PC-9 (cell line): ENCODE measurements at regions of chr2 and their contacts with region 1.

Region 1: DNA sequence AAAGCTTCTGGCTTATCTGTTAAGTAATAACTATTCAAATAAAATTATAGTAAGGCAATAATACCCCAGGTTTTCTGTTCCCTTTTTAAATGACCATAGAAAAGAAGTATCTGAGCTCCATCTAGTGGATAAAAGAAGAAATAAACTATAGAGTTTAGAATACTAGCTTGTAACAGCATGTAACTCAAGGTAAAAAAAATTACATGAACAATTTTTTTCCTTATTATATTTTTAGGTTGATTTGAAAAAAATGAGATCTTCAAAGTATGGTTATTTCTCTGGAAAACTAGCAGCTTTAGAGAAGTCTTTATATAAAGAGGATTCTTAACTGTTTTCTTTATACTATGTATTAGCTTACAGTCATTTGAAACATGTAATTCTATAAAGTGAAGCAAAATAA is 58.1 kb downstream of the NCKAP1 start:
- DNase-seq: peak in 1 of 2 experiments; percentile 78
- H3K4me3 ChIP-seq: no peak overlapping the region
- H3K27ac ChIP-seq: no peak overlapping the region
- H3K4me1 ChIP-seq: no peaks in the 10 kb centered on the region
- H3K27me3 ChIP-seq: no peaks in the 10 kb centered on the region
- CTCF ChIP-seq: peak; percentile 91

Region 2: DNA sequence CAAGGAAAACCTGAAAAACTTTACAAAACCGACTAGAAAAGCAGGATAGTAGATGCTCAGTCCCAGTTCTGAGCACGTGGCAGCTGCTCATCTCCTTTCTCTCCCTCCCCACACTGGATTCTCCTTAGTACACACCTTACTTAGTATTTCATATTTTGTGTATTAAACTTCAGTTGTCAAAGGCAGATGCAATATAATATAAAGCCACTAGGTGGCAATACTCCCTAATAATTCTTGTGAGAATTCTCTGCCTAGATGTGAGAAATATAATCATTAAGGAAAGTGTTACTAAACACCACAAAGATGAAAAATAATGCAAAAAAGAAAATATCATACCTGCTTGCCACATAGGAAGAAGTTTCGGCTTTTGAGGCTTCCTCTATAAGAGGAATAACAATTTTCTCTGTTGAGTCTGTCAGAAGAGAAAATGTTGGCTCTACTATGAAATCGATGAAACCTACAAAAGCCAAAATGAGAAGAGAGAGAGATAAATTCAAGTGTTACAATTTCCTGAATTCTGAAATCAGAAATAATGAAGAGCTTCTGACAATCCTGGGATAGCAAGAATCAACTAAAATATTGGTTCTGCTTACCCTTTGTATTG is 793.9 kb before region 1 on chr2:
- CTCF ChIA-PET with region 1: no interaction called
- POLR2A ChIA-PET with region 1: no interaction called
- intact Hi-C with region 1: loop called (anchors 5 kb)
- DNase-seq: peak in 1 of 2 experiments; percentile 56
- H3K4me3 ChIP-seq: no peak overlapping the region
- H3K27ac ChIP-seq: no peak overlapping the region
- H3K4me1 ChIP-seq: no peaks in the 10 kb centered on the region
- H3K27me3 ChIP-seq: no peaks in the 10 kb centered on the region
- CTCF ChIP-seq: peak; percentile 99

Region 3: GRCh38 chr2:182666674-182667314 is 313.3 kb before region 1 on chr2:
- CTCF ChIA-PET with region 1: interaction called, 6 read pairs
- POLR2A ChIA-PET with region 1: no interaction called
- intact Hi-C with region 1: loop called (anchors 10 kb)
- DNase-seq: no peak
- H3K4me3 ChIP-seq: no peak overlapping the region
- H3K27ac ChIP-seq: no peak overlapping the region
- H3K4me1 ChIP-seq: no peaks in the 10 kb centered on the region
- H3K27me3 ChIP-seq: no peaks in the 10 kb centered on the region
- CTCF ChIP-seq: peak; percentile 88

Region 4: DNA sequence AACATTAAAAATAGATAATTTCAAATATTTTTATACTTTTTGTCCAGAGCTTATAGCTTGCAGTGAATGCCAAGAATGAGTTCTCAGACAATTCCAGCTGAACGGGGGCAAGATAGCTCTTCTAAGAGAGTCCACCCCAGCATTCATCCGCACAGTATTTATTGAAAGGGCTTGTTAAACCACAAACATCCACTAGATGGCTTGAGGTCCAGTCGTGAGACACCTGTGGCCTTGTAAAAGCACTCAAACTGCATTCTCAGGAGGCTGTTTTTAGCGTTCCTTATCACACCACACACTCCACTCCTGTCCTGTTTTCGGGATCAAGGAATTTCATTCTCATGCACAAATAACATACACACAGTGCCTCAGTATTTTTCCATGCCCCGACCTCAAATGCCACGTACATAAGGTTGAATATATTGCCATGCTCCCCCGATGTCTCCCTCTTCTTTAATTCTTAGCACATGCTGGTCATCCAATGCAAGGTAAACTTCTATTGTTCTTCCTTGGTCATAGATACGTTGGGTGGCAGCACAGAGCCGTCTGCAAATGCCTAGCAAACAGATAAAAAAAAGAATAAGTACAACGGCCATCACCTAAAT is 216.7 kb before region 1 on chr2:
- CTCF ChIA-PET with region 1: interaction called, 6 read pairs
- POLR2A ChIA-PET with region 1: no interaction called
- intact Hi-C with region 1: loop called (anchors 5 kb)
- DNase-seq: peak in 1 of 2 experiments; percentile 11
- H3K4me3 ChIP-seq: no peak overlapping the region
- H3K27ac ChIP-seq: no peak overlapping the region
- H3K4me1 ChIP-seq: no peaks in the 10 kb centered on the region
- H3K27me3 ChIP-seq: no peaks in the 10 kb centered on the region
- CTCF ChIP-seq: peak; percentile 86

Region 5: DNA sequence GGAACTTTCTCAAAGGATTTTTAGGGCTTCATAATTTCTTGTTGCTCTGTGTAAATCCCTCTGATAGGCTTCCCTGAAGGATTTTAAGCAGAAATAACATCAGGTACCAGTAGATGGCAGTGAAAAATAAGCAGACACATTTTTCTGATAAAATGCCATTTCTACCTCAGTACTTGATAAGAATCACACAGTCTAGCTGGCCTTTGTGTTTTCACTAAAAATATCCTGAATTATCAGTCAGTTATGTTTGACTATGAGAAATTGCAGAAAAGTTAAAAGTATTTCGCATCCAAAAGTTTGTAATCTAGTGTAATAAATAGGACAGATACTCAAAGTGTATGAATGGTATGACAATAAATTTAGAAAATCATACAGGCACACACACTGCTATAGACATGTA is 195.3 kb before region 1 on chr2:
- CTCF ChIA-PET with region 1: interaction called, 10 read pairs
- POLR2A ChIA-PET with region 1: no interaction called
- intact Hi-C with region 1: loop called (anchors 1 kb)
- DNase-seq: peak in 1 of 2 experiments; percentile 46
- H3K4me3 ChIP-seq: no peak overlapping the region
- H3K27ac ChIP-seq: no peak overlapping the region
- H3K4me1 ChIP-seq: no peaks in the 10 kb centered on the region
- H3K27me3 ChIP-seq: no peaks in the 10 kb centered on the region
- CTCF ChIP-seq: peak; percentile 81